ENCODE measurements at regions of chr7 and their contacts with region 1.

Region 1: GRCh38 chr7:23531794-23532489 is at the start of gene TRA2A:
- DNase-seq: peak; percentile 98 to 100
- ATAC-seq: peak; percentile 100
- H3K4me3 ChIP-seq: peak within 1 kb of the TSS; percentile 77 to 90
- H3K27ac ChIP-seq: peak within 1 kb of the TSS; percentile 47 to 93
- H3K4me1 ChIP-seq: no peaks in the 10 kb centered on the region
- H3K27me3 ChIP-seq: no peaks in the 10 kb centered on the region
- total RNA-seq, gene TRA2A: 74.9 to 98.7 TPM

Region 2: GRCh38 chr7:23298885-23299769 is 232.8 kb before region 1 on chr7 and contains the start of gene MALSU1:
- intact Hi-C with region 1: loop called in 1 of 2 experiments (anchors 5 kb)
- DNase-seq: peak; percentile 98 to 99
- ATAC-seq: peak; percentile 100
- H3K4me3 ChIP-seq: peak within 1 kb of the TSS; percentile 73 to 98
- H3K27ac ChIP-seq: peak within 1 kb of the TSS; percentile 73 to 91
- H3K4me1 ChIP-seq: peaks cover 0 to 2% of the 10 kb centered on the region in 2 donors
- H3K27me3 ChIP-seq: no peaks in the 10 kb centered on the region
- total RNA-seq, gene MALSU1: 32.1 to 43.4 TPM

Region 3: GRCh38 chr7:23347682-23348180 is 184.2 kb before region 1 on chr7:
- intact Hi-C with region 1: no loop called
- DNase-seq: no peak
- ATAC-seq: no peak
- H3K4me3 ChIP-seq: no peak overlapping the region
- H3K27ac ChIP-seq: no peak overlapping the region
- H3K4me1 ChIP-seq: no peaks in the 10 kb centered on the region
- H3K27me3 ChIP-seq: peaks cover 0 to 1% of the 10 kb centered on the region in 2 donors

Region 4: GRCh38 chr7:24050991-24051560 is 519.1 kb after region 1 on chr7:
- intact Hi-C with region 1: no loop called
- DNase-seq: no peak
- ATAC-seq: no peak
- H3K4me3 ChIP-seq: no peak overlapping the region
- H3K27ac ChIP-seq: no peak overlapping the region
- H3K4me1 ChIP-seq: no peaks in the 10 kb centered on the region
- H3K27me3 ChIP-seq: peaks cover 0 to 2% of the 10 kb centered on the region in 2 donors